Astrocyte of the cerebellum (primary cell): ENCODE measurements at regions of chr2 and their contacts with region 1.

Region 1: DNA sequence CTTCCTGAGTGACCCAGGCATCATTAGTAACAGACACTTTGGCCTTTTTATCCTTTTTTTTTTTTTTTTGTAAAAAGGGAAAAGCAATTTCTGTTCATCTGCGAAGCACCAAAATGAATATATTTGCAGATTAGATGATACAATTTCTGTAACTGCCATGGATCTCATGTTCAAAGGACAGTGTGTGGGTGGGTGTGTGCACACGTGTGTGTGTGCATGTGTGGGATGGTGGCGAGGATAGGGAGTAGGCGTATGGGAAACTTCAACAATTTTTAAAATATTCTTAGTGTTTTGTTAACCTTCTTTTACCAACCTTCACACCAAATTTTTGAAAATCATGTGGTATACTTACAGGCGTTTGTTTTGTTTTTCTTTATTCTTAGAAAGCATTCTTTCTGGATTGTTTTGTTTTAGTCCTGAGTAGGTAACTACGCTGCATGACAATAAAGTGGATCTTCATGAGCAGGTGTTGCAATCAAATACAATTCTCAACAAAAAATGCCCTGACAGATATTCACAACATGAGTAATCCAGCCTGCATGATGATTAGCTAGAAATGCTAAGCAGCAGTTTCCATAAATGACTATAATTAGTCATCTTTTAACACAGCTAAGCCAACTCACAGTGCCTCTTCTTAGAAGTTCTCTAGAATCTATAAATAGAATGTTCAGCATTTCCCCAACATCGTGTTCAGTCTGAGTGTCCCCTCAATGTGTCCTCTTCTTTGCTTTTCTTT is 53.5 kb upstream of the RMDN2 start:
- DNase-seq: no peak
- H3K4me3 ChIP-seq: no peak overlapping the region
- CTCF ChIP-seq: no peak

Region 2: DNA sequence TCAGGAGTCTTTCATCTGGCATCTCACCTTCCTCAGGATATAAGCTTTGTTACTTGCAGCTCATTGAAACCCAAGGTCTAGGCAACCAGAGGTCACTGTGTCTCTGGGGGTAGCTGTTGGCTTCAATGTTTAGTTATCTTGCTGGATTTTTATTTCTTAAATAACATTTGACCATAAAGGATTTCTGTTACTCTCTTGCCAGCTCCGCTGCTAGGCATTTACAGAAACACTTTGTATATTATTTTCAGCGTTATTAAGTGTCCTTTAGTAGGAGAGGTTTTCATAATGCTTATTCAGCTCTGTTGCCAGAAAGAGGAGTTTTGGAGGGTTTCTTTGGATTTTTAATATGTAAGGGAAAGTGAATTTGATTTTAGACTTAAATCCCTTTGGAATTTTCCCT is 465.8 kb before region 1 on chr2:
- in situ Hi-C with region 1: loop called (anchors 5 kb)
- DNase-seq: no peak
- H3K4me3 ChIP-seq: no peak overlapping the region
- CTCF ChIP-seq: no peak

Region 3: DNA sequence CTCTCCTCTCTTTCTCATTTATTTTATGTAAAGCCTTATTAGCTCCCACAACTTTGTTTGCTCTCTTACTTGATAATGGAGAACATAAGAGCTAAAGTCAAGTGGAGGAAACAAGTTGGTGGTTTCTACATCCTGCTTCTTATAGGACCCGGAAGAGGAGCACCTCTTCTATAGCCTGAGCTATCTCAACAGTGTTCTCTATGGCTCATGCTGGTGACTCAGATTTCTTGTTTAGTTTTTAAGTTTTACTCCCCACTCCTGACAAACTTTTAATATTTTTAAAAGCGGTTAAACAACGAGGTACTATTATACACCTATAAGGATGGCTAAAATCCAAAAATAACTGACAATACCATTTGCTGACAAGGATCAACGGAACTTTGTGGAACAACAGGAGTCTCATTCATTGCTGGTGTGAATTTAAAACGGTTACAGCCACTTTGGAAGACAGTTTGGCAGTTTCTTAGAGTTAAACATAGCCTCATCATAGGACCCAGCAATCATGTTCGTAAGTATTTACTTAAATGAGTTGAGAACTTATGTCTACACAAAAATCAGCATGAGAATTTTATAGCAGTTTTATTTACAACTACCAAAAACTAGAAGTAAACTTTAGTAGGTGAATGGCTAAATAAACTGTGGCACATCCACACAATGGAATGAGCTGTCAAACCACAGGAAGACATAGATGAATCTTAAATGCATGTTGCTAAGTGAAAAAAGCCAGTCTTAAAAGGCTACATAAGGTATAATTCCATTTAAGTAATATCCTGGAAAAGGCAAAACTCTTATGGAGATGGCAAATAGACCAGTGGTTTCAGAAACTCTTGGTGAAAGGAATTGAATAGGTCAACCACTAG is 187.5 kb before region 1 on chr2:
- in situ Hi-C with region 1: no loop called
- DNase-seq: no peak
- H3K4me3 ChIP-seq: no peak overlapping the region
- CTCF ChIP-seq: no peak